ENCODE measurements at regions of chr11 and their contacts with region 1.

Region 1: DNA sequence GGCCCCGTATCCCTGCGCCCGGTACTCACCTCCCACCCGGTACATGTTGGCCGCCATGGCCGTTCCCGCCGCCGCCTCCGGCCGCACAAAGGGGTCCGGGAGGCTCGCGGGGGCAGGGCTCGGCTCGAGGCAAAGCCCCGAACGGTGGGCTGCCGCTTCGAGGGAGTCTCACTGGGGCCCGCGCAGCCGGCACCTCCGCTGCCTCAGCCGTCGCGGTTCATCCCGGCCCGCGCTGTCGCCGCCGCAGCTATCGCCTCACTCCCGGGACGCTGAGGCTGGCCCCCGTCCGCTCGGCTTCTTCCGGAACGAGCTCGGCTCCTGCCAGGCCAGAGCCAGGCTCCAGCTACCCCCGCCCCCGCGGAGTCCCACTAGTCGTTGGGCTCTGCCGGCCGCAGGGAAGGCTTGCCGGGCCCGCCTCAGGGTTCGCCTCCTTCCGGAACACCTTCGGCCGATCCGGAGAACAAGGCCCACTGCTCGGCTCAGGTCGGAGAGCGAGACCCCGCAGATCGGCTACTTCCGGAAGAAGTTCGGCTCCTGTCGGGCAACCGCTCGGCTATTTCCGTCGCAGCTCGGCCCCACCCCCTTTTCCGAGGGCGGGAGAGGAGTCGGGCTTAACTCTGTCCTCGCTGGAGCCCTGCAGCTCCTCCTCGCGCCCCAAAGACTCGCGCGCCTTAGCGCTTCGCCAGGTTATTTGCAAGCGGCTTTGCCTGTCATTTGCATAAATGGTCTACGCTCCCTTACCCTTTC is at the start of gene MTA2:
- DNase-seq: peak; percentile 99
- H3K4me3 ChIP-seq: peak within 1 kb of the TSS; percentile 68 to 88 (median 78)
- H3K27ac ChIP-seq: peak within 1 kb of the TSS; percentile 66
- H3K4me1 ChIP-seq: peaks cover 30% of the 10 kb centered on the region
- H3K27me3 ChIP-seq: no peaks in the 10 kb centered on the region
- CTCF ChIP-seq: no peak
- total RNA-seq, gene MTA2: 157 to 169 TPM

Region 2: GRCh38 chr11:62421996-62422395 is 179.6 kb before region 1 on chr11:
- CTCF ChIA-PET with region 1: no interaction called
- dilution Hi-C with region 1: no loop called
- in situ Hi-C with region 1: no loop called
- intact Hi-C with region 1: loop called (anchors 5 kb)
- DNase-seq: no peak
- H3K4me3 ChIP-seq: no peak overlapping the region
- H3K27ac ChIP-seq: no peak overlapping the region
- H3K4me1 ChIP-seq: peaks cover 4% of the 10 kb centered on the region
- H3K27me3 ChIP-seq: peaks cover 3% of the 10 kb centered on the region
- CTCF ChIP-seq: no peak

Region 3: GRCh38 chr11:62497132-62497915 is 104.2 kb before region 1 on chr11:
- CTCF ChIA-PET with region 1: no interaction called
- dilution Hi-C with region 1: no loop called
- in situ Hi-C with region 1: no loop called
- intact Hi-C with region 1: no loop called
- DNase-seq: peak; percentile 84
- H3K4me3 ChIP-seq: no peak overlapping the region
- H3K27ac ChIP-seq: peak overlapping the region; percentile 66
- H3K4me1 ChIP-seq: peaks cover 35% of the 10 kb centered on the region
- H3K27me3 ChIP-seq: no peaks in the 10 kb centered on the region
- CTCF ChIP-seq: peak; percentile 44 to 63

Region 4: DNA sequence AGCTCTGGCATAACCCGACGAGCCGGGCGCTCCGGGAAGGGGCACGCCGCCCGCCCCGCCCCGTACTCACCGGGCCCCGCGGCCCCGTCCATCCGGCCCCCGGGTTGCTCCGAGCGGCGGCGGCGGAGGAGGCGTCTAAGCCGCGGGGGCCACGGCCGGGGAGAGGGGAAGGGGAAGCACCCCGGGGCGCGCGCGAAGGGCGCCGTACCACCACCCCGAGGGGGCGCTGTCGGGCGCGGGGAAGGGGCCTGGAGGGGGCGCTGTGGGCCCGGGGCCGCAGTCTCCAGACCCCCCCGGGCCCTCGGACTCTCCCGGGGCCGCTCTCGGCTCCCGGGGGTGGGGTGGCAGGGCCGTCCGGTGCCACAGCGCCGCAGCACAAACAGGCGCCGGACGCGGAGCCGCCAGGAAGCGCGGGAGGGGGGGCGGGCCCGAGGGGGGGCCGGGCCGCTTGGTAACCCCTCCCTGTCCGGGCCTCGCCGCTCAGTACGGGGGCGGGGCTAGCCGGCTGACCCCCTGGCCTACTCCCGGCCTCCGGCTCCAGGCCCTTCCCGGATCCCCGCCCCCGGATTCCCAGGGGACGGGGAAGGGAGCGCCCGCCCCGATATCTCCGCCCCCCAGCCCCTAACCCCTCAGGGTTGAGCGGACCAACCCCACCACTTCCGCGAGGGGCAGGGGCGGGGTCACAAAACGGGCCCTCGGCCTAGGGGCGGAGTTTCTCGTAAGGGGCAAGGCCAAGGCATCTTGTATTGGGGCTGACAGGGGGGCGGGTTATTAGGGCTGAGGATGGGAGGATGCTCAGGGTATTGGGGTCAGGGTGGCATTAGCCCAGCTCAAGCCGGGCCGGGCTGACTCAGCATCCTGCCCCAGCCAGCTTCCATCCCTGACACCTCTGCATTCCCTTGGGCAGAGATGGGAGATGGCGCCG is 11.1 kb after region 1 on chr11 and contains the starts of genes EML3 and ROM1:
- CTCF ChIA-PET with region 1: interaction called, 7 read pairs
- dilution Hi-C with region 1: no loop called
- in situ Hi-C with region 1: no loop called
- intact Hi-C with region 1: loop called (anchors 1 kb)
- DNase-seq: peak; percentile 75
- H3K4me3 ChIP-seq: peak within 1 kb of the TSS; percentile 72 to 84 (median 76)
- H3K27ac ChIP-seq: peak within 1 kb of the TSS; percentile 56
- H3K4me1 ChIP-seq: peaks cover 33% of the 10 kb centered on the region
- H3K27me3 ChIP-seq: no peaks in the 10 kb centered on the region
- CTCF ChIP-seq: peak; percentile 38 to 88
- total RNA-seq, gene EML3: 21.0 to 46.6 TPM
- total RNA-seq, gene ROM1: 2.3 TPM

Region 5: DNA sequence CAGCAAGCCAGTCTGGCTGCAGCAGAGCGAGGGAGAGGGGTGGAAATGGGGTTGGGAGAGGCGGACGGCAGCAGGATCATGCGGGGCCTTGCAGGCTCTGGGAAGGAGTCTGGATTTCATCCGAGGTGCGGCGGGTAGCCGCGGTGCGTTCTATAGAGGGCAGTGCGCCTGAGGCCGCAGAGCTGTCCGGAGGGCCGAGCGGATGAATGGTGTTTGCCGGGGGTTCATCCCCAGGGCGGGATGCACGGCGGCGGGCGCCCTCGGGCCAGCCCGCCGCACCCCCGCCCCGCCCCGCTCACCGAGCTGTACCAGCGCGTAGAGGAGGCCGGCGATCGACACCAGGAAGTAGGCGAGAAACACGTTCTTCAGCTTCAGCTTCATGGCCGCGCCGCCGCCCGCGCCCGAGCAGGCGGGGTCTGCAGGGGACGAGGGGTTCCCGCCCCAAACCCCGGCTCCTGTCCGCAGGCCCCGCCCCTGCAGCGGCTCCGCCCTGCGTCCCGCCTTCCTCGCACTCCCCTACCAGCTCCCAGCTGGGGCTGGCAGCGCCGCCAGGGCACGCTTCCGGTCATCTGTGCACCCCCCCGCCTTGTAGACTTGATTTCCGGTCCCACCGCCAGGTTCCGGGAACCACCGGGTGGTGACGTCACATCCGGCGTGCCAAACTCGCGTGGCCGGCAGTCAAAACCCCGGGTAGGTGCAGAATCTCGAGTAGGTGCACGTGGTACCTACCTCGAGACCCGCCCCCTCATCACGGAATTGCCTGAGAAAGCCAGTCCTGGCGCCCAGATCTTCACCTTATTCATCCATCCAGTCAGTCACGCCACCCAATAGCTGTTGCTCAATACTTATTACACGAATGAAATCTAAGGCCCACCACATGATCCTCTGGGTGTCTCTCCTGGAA is 20.3 kb after region 1 on chr11 and contains the start of gene B3GAT3:
- CTCF ChIA-PET with region 1: no interaction called
- dilution Hi-C with region 1: no loop called
- in situ Hi-C with region 1: no loop called
- intact Hi-C with region 1: loop called (anchors 1 kb)
- DNase-seq: peak; percentile 99
- H3K4me3 ChIP-seq: peak within 1 kb of the TSS; percentile 71 to 78 (median 72)
- H3K27ac ChIP-seq: peak within 1 kb of the TSS; percentile 83
- H3K4me1 ChIP-seq: peaks cover 27% of the 10 kb centered on the region
- H3K27me3 ChIP-seq: no peaks in the 10 kb centered on the region
- CTCF ChIP-seq: no peak
- total RNA-seq, gene B3GAT3: 37.8 to 42.0 TPM

Region 6: GRCh38 chr11:62645956-62646824 is 44.6 kb after region 1 on chr11 and contains the start of gene GANAB:
- CTCF ChIA-PET with region 1: no interaction called
- dilution Hi-C with region 1: no loop called
- in situ Hi-C with region 1: no loop called
- intact Hi-C with region 1: loop called (anchors 2 kb)
- DNase-seq: peak; percentile 97
- H3K4me3 ChIP-seq: peak within 1 kb of the TSS; percentile 68 to 82 (median 80)
- H3K27ac ChIP-seq: peak within 1 kb of the TSS; percentile 63
- H3K4me1 ChIP-seq: peaks cover 12% of the 10 kb centered on the region
- H3K27me3 ChIP-seq: no peaks in the 10 kb centered on the region
- CTCF ChIP-seq: no peak
- total RNA-seq, gene GANAB: 180 to 258 TPM

Measured in mammary epithelial cell (primary cell).